PC-9 (cell line): ENCODE measurements at regions of chr1 and their contacts with region 1.

Region 1: DNA sequence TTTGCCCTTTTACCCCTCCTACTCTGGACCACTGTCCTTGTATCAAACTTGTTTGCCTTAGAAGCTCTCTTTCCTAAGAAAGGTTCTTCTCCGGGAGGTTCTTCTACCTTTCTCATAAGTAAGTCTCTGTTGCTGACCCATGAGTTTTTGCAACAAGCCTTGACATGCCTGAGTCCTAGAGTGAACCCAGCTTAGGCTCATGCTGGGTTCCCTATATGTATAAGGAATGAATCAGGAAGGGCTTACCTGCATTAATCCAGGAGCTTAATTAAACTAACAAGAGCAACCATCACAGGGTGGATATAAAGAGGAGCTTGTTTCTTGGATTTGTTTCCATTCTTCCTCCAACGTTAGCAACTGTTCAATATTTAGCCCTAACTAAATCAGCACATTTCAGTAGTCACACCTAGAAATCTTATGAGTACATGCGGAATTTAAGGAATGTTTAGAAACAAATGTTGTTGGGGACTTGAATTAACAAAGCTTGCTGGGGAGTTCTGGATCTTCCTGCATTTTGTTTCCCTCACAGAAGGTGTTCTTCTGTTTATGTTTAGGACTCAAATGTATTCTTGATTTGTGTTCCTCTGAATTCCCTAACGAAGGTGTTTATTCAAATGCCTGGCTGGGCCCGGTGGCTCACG is 64.3 kb upstream of the RAB3GAP2 start:
- DNase-seq: no peak
- H3K4me3 ChIP-seq: no peak overlapping the region
- H3K27ac ChIP-seq: peak overlapping the region; percentile 49
- H3K4me1 ChIP-seq: peaks cover 33% of the 10 kb centered on the region
- H3K27me3 ChIP-seq: no peaks in the 10 kb centered on the region
- CTCF ChIP-seq: no peak

Region 2: DNA sequence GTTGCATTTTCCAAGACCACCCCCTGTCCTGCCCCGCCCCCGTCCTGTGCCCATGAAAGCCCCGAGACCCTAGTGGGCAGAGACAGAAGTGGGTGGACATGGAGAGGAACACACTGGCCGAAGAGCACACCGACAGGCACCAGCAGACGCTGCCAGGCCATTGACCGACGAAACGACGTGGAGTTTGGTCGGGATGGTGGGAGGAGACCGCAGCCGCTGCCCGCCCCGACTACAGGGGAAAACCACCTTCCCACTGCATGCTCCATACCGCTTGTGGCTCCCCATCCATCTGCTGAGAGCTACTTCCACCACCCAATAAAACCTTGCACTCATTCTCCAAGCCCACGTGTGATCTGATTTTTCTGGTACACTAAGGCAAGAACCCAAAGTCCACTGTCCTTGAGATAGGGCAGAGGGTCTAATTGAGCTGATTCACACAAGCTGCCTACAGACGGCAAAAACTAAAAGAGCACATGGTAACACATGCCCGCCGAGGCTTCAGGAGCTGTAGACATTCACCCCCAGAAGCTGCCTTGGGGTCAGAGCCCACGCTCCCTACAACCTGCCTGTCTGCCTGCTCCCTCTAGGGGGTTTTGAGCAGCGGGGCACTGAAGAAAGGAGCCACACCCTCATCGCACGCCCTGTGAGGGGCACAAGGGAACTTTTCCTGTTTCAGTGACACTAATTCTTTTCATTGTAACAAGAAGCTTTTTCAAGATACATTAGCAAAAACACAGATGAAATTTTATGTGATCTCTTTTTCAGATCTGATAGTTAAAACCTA is 16.9 kb after region 1 on chr1:
- CTCF ChIA-PET with region 1: interaction called, 10 read pairs
- POLR2A ChIA-PET with region 1: no interaction called
- intact Hi-C with region 1: no loop called
- DNase-seq: no peak
- H3K4me3 ChIP-seq: no peak overlapping the region
- H3K27ac ChIP-seq: no peak overlapping the region
- H3K4me1 ChIP-seq: no peaks in the 10 kb centered on the region
- H3K27me3 ChIP-seq: no peaks in the 10 kb centered on the region
- CTCF ChIP-seq: no peak

Region 3: DNA sequence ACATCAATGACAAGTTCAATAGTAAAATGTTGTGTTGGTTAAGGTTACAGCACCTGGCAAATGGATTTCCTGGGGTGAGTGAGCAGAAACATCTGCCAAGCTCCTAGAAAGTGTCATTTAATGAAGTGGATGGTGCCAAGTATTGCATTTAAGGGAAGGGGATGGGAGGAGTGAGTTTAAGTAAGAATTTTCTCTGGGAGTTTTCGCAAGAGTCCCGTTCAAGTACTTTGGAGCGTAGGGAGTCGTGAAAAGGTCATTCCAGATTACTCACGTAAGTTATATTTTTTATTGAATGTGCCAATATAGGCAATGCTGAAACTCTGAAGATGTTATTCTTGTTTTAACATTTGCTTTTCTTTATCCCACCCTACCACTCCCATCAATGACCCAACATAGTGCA is 53.1 kb after region 1 on chr1:
- CTCF ChIA-PET with region 1: no interaction called
- POLR2A ChIA-PET with region 1: no interaction called
- intact Hi-C with region 1: no loop called
- DNase-seq: no peak
- H3K4me3 ChIP-seq: no peak overlapping the region
- H3K27ac ChIP-seq: no peak overlapping the region
- H3K4me1 ChIP-seq: peaks cover 9% of the 10 kb centered on the region
- H3K27me3 ChIP-seq: no peaks in the 10 kb centered on the region
- CTCF ChIP-seq: no peak